GM13977 (cell line): ENCODE measurements at regions of chr11 and their contacts with region 1.

Region 1: DNA sequence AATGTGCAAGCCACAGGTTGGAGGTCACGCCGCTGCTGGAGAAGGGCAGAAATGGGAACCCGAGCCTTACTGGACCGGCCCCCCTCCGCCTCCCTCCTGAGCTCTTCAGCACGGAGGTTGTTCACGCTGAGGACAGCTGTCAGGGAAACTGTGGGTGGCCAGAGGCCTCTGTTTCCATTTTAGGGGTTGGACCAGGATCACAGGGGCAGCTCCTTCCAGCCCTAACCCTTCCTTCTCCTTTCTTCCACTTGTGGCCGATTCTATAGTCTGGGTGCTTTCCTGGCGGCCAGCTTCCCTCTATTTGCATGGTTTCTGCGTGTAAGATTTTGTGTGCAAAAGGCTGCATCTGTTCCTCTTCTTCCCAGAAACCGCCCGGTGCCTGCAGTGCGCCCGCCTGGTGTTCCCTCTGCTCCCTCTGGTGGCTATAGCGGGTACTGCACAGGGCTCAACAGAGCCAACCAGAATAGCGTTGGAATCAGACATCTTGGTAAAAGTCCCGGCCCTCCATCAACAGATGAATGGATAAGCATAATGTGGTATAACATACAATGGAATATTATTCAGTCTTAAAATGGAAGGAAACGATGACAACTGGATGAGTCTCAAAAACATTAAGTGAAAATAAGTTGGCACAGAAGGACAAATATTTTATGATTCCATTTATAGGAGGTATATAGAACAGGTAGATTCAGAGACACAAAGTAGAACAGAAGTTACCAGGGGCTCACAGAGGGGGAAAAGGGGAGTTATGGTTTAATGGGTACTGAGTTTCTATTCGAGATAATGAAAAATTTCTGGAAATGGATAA is 8.4 kb upstream of the SLC22A8 start:
- DNase-seq: peak; percentile 85
- CTCF ChIP-seq: peak; percentile 98

Region 2: DNA sequence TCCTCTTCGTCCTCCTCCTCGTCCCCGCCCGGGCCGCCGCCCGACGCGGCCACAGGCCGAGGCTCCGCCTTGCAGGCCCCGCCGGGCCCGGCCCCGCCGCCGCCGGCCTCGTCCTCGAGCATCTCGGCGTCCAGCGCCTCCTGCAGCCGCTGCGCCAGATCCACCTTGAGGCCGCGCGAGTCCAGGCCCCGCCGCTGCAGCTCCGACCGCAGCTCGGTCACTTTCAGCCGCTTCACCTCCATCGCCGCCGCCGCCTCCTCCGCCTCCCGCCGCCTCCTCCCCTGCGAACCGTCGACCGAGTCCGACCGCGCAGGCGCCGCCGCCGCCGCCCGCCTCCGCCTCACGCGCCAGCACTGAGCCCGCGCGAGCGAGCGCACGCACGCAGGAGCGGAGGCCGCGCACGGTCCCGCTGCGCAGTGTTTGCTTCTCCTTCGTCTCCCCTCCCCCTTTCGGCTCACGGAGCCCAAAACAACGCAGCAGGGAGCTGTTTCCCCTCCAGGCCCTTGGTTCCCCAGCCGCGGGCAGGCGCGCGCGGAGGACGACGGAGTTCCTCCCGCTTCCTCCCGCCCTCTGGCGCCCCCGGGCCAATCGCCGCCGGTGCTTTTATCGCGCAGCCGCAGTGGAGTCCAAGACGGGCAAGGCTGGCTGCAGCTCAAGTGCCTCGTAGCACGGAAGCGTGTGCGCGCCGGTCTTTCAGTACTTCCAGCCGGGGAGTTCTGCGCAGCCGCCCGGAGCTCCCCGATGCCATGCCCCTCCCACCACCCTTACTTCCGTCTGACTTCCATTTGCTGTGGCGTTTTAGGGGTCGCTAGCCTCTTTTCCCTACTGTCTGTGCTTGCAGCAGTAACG is 296.9 kb before region 1 on chr11 and contains the start of gene HNRNPUL2:
- in situ Hi-C with region 1: no loop called
- DNase-seq: peak; percentile 99
- CTCF ChIP-seq: no peak

Region 3: DNA sequence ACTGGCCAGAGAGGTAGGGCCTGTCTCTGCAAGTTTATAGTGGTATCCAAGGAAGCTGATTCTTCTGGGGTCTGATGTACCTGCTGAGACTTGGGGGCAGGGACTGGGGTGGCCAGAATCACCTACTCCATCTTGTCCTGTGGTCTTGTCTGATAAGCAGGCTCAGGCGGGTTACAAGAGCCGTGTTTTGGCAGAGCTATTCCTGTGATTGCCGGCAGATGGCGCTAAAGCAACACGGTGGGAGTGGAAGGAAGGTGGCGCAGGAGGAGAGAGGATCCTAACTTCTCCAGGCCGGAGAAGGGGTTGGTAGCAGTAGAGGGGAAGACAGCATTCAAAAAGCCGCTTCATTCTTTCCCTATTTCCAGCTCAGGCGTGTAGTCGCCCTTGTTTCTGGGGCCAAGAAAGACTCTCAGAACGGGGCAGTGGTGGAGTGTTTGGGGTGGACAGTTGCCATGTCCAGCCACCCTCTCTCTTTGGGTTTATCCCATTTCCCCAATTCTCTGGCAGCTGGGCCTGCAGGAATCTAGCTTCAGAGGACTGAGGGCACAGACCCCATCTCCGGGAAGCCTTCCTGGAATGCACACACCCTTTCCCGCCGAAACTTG is 118.0 kb before region 1 on chr11:
- in situ Hi-C with region 1: loop called (anchors 5 kb)
- DNase-seq: peak; percentile 85
- CTCF ChIP-seq: peak; percentile 98

Region 4: DNA sequence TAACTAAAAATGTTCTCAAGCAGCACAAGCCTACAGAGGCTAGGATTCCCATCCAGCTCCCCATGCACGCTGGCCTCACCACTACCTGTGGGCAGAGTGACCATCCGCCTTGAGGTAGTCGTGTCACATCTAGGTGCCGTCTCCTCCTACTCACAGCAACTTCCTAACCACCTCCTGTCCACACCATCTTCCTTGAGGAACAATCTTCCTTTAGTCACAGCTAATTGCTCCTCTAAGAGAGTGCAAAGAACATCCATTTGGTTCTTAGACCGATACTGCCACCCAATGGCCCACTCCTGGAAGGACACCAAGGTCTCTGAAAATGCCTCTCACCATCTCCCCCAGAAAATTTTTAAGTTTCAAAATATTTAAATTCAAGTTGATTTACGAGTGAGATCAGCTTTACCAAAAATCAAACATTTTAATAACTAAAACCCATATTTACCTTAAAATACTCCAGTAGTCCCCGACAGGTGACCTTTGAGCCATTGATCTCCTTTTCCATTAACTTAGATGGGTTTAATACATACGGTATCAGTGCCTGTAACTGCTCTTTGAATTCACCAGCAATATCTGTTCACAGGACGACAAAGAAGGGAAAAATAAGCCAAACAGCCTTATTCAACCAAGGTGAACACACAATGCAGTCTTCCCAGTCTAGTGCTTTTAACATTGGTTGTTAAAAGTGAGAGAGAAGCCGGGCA is 611.9 kb after region 1 on chr11:
- in situ Hi-C with region 1: loop called (anchors 25 kb)
- DNase-seq: peak; percentile 67
- CTCF ChIP-seq: peak; percentile 76